GM10248 (cell line): ENCODE measurements at regions of chr12 and their contacts with region 1.

Region 1: GRCh38 chr12:40534828-40535227 is 157.4 kb upstream of the CNTN1 start:
- DNase-seq: no peak
- CTCF ChIP-seq: no peak

Region 2: GRCh38 chr12:40552868-40553267 is 18.0 kb after region 1 on chr12:
- CTCF ChIA-PET with region 1: interaction called, 10 read pairs
- POLR2A ChIA-PET with region 1: no interaction called
- DNase-seq: no peak
- CTCF ChIP-seq: no peak

Region 3: DNA sequence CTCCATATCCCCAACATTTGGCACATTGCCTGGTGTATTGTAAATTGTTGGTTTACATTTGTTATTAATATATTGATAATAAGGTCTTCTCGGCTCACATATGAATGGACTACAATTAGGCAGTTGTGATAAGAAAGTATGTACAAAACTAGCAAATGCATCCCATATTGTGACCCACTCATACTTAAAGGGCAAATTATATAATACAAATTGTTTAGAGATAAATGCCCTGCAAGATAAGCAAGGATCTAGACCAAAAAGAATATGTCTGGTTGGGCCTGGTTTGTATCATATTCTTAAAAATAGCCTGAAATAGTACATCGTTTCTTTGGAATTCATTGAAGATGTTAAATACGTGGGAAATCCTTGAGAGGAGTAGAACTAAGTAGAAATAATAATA is 308.7 kb after region 1 on chr12:
- CTCF ChIA-PET with region 1: no interaction called
- POLR2A ChIA-PET with region 1: no interaction called
- DNase-seq: no peak
- CTCF ChIP-seq: no peak